ENCODE measurements at regions of chr10 and their contacts with region 1.

Region 1: GRCh38 chr10:114541081-114541796 is 116.8 kb downstream of the ABLIM1 start:
- DNase-seq: peak in 4 of 5 donors; percentile 70 to 88 (median 76)
- ATAC-seq: peak; percentile 84 to 95 (median 93)
- H3K4me3 ChIP-seq: no peak overlapping the region
- H3K27ac ChIP-seq: peak overlapping the region; percentile 25 to 86 (median 76)
- H3K4me1 ChIP-seq: peaks cover 17 to 81% (median 52%) of the 10 kb centered on the region in 12 donors
- H3K27me3 ChIP-seq: no peaks in the 10 kb centered on the region
- CTCF ChIP-seq: no peak
- POLR2A ChIP-seq: no peak

Region 2: DNA sequence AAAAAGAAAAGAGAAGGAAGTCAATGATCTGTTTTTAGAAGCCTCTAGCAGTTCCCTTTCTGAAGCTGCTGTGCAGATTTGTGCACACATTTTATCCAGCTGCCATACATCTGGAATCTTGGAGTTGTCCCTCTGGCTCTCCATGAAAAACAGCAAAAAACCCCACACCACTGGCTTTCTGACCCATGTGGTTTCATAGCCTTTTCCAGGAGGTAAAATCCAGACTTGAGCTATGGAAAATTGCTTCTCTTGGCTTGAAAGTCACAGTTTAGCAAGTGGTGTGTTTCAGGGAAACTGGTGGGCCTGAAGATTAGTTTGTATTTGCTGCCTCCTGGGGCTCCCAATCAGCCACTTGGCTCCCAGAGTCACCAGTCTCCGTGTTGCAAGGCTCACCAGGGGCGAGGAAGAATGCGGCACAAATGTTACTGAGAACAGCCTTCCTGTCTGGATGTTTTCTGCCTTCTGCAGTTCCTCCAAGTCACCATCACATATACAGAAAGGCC is 547.7 kb before region 1 on chr10:
- intact Hi-C with region 1: no loop called
- DNase-seq: peak; percentile 38 to 70 (median 66)
- ATAC-seq: peak; percentile 70 to 84 (median 81)
- H3K4me3 ChIP-seq: no peak overlapping the region
- H3K27ac ChIP-seq: peak overlapping the region in 8 of 12 donors; percentile 6 to 61 (median 46)
- H3K4me1 ChIP-seq: peaks cover 0 to 44% (median 10%) of the 10 kb centered on the region in 12 donors
- H3K27me3 ChIP-seq: no peaks in the 10 kb centered on the region
- CTCF ChIP-seq: peak in 1 of 12 donors; percentile 17
- POLR2A ChIP-seq: no peak

Region 3: GRCh38 chr10:114492351-114493037 is 48.7 kb before region 1 on chr10:
- intact Hi-C with region 1: loop called in 1 of 10 experiments (anchors 5 kb)
- DNase-seq: no peak
- ATAC-seq: peak in 1 of 4 donors; percentile 21
- H3K4me3 ChIP-seq: no peak overlapping the region
- H3K27ac ChIP-seq: peak overlapping the region in 11 of 12 donors; percentile 20 to 64 (median 45)
- H3K4me1 ChIP-seq: peaks cover 3 to 67% (median 44%) of the 10 kb centered on the region in 12 donors
- H3K27me3 ChIP-seq: no peaks in the 10 kb centered on the region
- CTCF ChIP-seq: no peak
- POLR2A ChIP-seq: no peak

Region 4: DNA sequence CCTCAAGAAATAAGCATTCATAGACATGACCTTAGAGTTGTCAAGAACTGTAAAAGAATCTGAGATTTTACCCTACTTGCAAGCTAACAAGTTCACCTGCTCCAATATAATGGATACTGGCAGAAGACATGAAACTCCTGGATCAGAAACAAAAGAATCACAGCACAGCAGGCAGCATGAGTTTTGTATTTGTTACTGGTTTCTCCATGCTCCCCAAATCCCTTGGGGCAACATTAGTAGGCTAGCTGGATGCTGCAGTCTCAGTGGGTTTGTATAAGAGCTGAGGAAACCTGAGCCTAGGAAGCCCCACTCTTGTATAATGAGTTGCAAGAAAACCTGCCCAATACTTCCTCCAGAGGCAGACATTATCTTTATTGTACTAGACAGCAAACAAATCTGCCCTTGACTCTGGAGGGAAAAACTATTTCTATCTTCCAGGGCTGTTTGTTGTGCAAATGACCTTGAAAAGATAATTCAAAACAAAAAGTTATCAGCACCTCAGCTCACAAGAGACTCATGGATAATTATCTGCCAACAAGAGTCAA is 52.1 kb after region 1 on chr10:
- intact Hi-C with region 1: no loop called
- DNase-seq: no peak
- ATAC-seq: no peak
- H3K4me3 ChIP-seq: no peak overlapping the region
- H3K27ac ChIP-seq: peak overlapping the region in 7 of 12 donors; percentile 7 to 69 (median 20)
- H3K4me1 ChIP-seq: peaks cover 0 to 59% (median 17%) of the 10 kb centered on the region in 12 donors
- H3K27me3 ChIP-seq: no peaks in the 10 kb centered on the region
- CTCF ChIP-seq: no peak
- POLR2A ChIP-seq: no peak

Region 5: DNA sequence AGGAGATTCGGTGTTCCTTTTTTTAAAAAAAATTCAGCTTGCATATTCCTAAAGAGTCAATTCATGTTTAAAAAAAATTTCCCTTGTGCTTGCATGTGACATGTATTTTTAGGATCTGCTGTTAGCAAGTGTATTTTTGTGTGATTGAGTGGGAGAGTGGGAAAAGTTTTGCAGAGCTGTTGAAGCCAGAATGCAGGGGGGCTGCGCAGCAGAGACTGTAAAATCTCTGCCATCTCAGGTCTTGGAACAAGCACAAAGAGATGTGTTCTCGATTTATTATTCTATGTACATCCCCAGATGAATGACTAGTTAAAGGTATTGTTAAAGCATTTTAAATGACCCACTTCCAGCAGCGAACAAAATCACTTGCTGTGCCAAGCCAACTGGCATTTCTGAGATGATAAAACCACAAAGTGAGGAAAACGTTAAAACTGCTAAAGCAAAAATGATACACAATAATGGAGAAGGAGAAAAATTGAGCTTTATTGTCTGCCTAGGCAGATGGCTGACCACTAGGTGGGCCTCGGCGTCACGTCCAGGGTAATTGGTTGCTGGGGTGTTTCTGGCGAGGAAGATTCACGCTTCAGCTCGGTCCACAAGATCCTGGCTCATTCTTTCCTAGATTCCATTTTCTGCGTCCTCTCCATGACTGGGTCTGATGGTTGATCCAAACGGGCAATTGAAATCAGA is 485.0 kb after region 1 on chr10:
- intact Hi-C with region 1: no loop called
- DNase-seq: no peak
- ATAC-seq: no peak
- H3K4me3 ChIP-seq: no peak overlapping the region
- H3K27ac ChIP-seq: no peak overlapping the region
- H3K4me1 ChIP-seq: no peaks in the 10 kb centered on the region
- H3K27me3 ChIP-seq: no peaks in the 10 kb centered on the region
- CTCF ChIP-seq: no peak
- POLR2A ChIP-seq: no peak